CD8-positive, alpha-beta memory T cell (primary cell): ENCODE measurements at regions of chr2 and their contacts with region 1.

Region 1: DNA sequence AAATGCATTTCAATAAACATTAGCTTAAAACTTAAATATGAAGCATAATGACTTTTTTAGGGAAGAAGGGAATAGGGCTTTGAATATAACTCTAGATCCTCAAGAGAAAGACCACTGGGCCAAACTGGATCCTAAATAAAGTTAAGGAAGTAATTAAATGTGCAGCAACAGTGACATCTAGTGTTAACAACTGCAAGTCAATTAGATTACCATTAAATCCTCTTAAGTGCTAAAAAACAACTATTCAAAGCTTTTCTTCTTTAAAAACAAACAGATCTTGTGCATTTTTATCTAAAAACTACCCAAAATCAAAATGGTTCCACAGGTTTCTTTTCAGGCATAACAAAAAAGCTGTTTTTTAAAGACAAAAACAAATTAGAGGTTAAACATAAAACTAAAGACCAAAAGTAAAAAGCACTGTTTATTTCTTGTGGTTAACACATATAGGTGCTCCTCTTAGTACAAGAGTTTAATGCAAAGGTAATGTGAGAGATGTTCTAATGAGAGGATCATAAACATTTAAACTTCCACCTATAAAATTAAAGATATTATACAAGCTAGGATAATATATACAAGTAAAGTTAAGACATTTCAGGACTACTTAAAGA is 111.4 kb downstream of the THADA start:
- DNase-seq: peak in 2 of 5 donors; percentile 34 to 48
- H3K4me3 ChIP-seq: no peak overlapping the region
- H3K4me3 Mint-ChIP-seq: peak overlapping the region in 2 of 7 donors; percentile 16 to 23
- H3K27ac ChIP-seq: no peak overlapping the region
- H3K27ac Mint-ChIP-seq: peak overlapping the region in 2 of 8 donors; percentile 70 to 79
- H3K4me1 ChIP-seq: no peaks in the 10 kb centered on the region
- H3K4me1 Mint-ChIP-seq: peaks cover 16 to 29% (median 21%) of the 10 kb centered on the region in 3 donors
- H3K27me3 ChIP-seq: no peaks in the 10 kb centered on the region
- H3K27me3 Mint-ChIP-seq: no peaks in the 10 kb centered on the region

Region 2: GRCh38 chr2:42944779-42945415 is 539.5 kb before region 1 on chr2:
- CTCF ChIA-PET with region 1: interaction called, 42 read pairs
- POLR2A ChIA-PET with region 1: interaction called, 3 read pairs
- DNase-seq: no peak
- H3K4me3 ChIP-seq: no peak overlapping the region
- H3K4me3 Mint-ChIP-seq: no peak overlapping the region
- H3K27ac ChIP-seq: no peak overlapping the region
- H3K27ac Mint-ChIP-seq: no peak overlapping the region
- H3K4me1 ChIP-seq: no peaks in the 10 kb centered on the region
- H3K4me1 Mint-ChIP-seq: no peaks in the 10 kb centered on the region
- H3K27me3 ChIP-seq: no peaks in the 10 kb centered on the region
- H3K27me3 Mint-ChIP-seq: peaks cover 0 to 2% of the 10 kb centered on the region in 2 donors

Region 3: DNA sequence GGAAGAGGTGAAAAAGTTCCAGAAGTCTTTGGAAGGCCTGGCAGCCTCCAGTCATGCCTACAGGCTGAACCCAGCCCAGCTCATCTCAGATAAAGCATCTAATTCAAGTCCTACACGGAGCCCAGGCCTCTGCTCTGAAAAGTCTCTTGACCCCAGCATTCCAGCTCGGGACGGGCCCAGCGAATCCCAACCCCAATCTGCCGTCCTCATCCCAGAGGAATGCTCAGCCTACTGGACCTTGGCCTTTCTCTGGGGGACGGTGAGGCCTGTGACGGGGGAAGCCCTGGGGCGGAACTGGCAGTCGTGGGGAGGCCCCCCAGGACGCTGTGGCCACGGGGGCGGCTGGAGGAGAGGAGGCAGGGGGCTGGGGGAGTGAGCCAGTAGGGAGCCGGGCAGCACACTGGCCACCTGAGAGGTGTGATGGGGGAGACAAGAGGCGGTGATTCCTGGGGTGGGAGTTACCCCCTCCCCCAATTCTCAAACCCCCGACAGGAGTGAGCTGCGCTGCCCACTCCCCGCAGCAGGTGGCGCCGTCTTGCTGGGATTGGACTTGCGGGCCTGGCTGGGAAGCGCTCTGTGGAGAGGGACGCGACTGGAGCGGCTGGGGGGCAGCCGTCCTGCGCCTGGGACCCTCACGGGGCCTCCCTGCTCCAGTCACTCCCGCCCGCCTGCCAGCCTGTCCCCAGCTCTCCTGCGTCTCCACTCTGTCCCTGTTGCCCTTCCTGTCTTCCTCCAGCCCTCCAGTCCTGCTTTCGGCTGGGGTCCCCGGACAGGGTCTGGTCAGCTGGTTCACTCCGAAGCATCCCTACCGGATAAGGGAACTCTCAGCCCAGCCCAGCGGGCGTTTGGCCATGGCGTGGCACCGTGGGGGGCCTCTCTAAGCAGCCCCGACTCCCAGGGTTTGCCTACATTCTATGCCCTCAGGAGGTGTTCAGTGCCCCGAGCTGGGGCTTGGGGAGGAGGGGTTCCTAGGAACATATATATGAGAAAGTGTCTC is 509.4 kb before region 1 on chr2:
- CTCF ChIA-PET with region 1: interaction called, 26 read pairs
- POLR2A ChIA-PET with region 1: no interaction called
- DNase-seq: peak; percentile 28 to 66 (median 34)
- H3K4me3 ChIP-seq: no peak overlapping the region
- H3K4me3 Mint-ChIP-seq: no peak overlapping the region
- H3K27ac ChIP-seq: no peak overlapping the region
- H3K27ac Mint-ChIP-seq: no peak overlapping the region
- H3K4me1 ChIP-seq: no peaks in the 10 kb centered on the region
- H3K4me1 Mint-ChIP-seq: peaks cover 7 to 18% (median 12%) of the 10 kb centered on the region in 3 donors
- H3K27me3 ChIP-seq: no peaks in the 10 kb centered on the region
- H3K27me3 Mint-ChIP-seq: peaks cover 0 to 3% of the 10 kb centered on the region in 2 donors

Region 4: DNA sequence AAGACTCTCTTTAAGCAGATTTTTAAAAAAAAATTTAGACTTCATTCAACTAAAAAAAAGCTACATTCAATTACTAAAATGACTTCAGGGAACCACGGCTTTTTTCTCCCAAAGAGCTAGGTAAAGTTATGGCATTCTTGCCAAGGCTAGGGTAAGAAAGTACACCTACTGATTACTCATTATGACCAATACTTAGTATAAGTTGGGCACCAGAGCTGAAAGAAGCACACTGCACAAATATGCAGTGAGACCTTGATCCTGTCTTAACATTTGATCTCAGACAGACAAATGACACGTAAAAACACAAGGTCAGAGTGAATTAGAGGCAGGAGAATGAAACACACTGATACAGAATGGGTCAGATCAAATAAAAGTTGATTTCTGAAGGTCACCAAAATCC is 22.7 kb after region 1 on chr2:
- CTCF ChIA-PET with region 1: no interaction called
- POLR2A ChIA-PET with region 1: no interaction called
- DNase-seq: no peak
- H3K4me3 ChIP-seq: no peak overlapping the region
- H3K4me3 Mint-ChIP-seq: no peak overlapping the region
- H3K27ac ChIP-seq: no peak overlapping the region
- H3K27ac Mint-ChIP-seq: peak overlapping the region in 4 of 8 donors; percentile 1 to 64 (median 28)
- H3K4me1 ChIP-seq: peaks cover 8% of the 10 kb centered on the region
- H3K4me1 Mint-ChIP-seq: peaks cover 20 to 37% (median 34%) of the 10 kb centered on the region in 3 donors
- H3K27me3 ChIP-seq: no peaks in the 10 kb centered on the region
- H3K27me3 Mint-ChIP-seq: no peaks in the 10 kb centered on the region